Psoas muscle (tissue), 8 donors: ENCODE measurements at regions of chr7 and their contacts with region 1.

Region 1: DNA sequence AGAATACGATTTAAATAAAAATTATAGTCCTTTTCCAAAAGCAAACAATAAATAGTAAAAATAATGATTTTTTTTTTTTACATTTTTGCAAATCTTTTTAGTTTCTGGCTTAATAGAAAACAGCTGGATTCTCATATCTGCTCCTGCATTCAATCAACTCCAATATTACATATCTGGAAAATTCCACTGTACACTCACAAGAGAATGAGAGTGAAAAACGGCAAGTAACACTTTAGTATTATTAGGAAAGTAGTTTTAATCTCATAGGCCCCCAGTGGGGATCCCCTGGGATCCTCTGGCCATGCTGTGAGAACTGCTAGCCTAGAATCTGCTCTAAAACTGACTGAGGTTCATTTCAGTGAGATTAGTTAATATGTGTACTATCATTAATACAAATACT is 128.6 kb upstream of the LRRN3 start:
- DNase-seq: no peak
- ATAC-seq: no peak
- H3K4me3 ChIP-seq: no peak overlapping the region
- H3K27ac ChIP-seq: no peak overlapping the region
- H3K4me1 ChIP-seq: no peaks in the 10 kb centered on the region
- H3K27me3 ChIP-seq: no peaks in the 10 kb centered on the region
- CTCF ChIP-seq: no peak

Region 2: GRCh38 chr7:110922906-110923305 is 39.5 kb before region 1 on chr7:
- intact Hi-C with region 1: loop called in 1 of 2 experiments (anchors 2 kb)
- DNase-seq: no peak
- ATAC-seq: no peak
- H3K4me3 ChIP-seq: no peak overlapping the region
- H3K27ac ChIP-seq: no peak overlapping the region
- H3K4me1 ChIP-seq: no peaks in the 10 kb centered on the region
- H3K27me3 ChIP-seq: no peaks in the 10 kb centered on the region
- CTCF ChIP-seq: no peak